ENCODE measurements at regions of chr7 and their contacts with region 1.

Region 1: GRCh38 chr7:145313551-145313950 is 477.7 kb upstream of the TPK1 start:
- DNase-seq: no peak
- H3K4me3 ChIP-seq: no peak overlapping the region
- CTCF ChIP-seq: no peak
- POLR2A ChIP-seq: no peak

Region 2: GRCh38 chr7:146054909-146055308 is 741.4 kb after region 1 on chr7:
- intact Hi-C with region 1: loop called (anchors 10 kb)
- DNase-seq: no peak
- H3K4me3 ChIP-seq: no peak overlapping the region
- CTCF ChIP-seq: no peak
- POLR2A ChIP-seq: no peak